H1 (cell line): ENCODE measurements at regions of chr3 and their contacts with region 1.

Region 1: GRCh38 chr3:32177702-32178198 is 60.7 kb upstream of the CMTM8 start:
- DNase-seq: peak in 1 of 2 experiments; percentile 73
- H3K4me3 ChIP-seq: no peak overlapping the region
- H3K27ac ChIP-seq: no peak overlapping the region
- H3K4me1 ChIP-seq: peaks cover 0 to 3% (median 0%) of the 10 kb centered on the region in 4 experiments; a peak in 1 of 7 replicates
- H3K27me3 ChIP-seq: no peaks in the 10 kb centered on the region
- CTCF ChIP-seq: peak; percentile 55 to 100 (median 96)
- EP300 ChIP-seq: no peak
- POLR2A ChIP-seq: no peak
- RAD21 ChIP-seq: peak; percentile 89 to 90

Region 2: GRCh38 chr3:32200490-32200889 is 22.7 kb after region 1 on chr3:
- CTCF ChIA-PET with region 1: interaction called, 10 read pairs
- POLR2A ChIA-PET with region 1: no interaction called
- DNase-seq: no peak
- H3K4me3 ChIP-seq: no peak overlapping the region
- H3K27ac ChIP-seq: no peak overlapping the region
- H3K4me1 ChIP-seq: no peaks in the 10 kb centered on the region
- H3K27me3 ChIP-seq: no peaks in the 10 kb centered on the region
- CTCF ChIP-seq: no peak
- EP300 ChIP-seq: no peak
- POLR2A ChIP-seq: no peak
- RAD21 ChIP-seq: no peak

Region 3: GRCh38 chr3:32257639-32258038 is 79.9 kb after region 1 on chr3:
- CTCF ChIA-PET with region 1: interaction called, 10 read pairs
- POLR2A ChIA-PET with region 1: no interaction called
- DNase-seq: no peak
- H3K4me3 ChIP-seq: no peak overlapping the region
- H3K27ac ChIP-seq: no peak overlapping the region
- H3K4me1 ChIP-seq: no peaks in the 10 kb centered on the region
- H3K27me3 ChIP-seq: no peaks in the 10 kb centered on the region
- CTCF ChIP-seq: no peak
- EP300 ChIP-seq: no peak
- POLR2A ChIP-seq: no peak
- RAD21 ChIP-seq: no peak

Region 4: GRCh38 chr3:32313723-32314473 is 136.1 kb after region 1 on chr3:
- CTCF ChIA-PET with region 1: interaction called, 28 read pairs
- POLR2A ChIA-PET with region 1: no interaction called
- DNase-seq: no peak
- H3K4me3 ChIP-seq: no peak overlapping the region
- H3K27ac ChIP-seq: no peak overlapping the region
- H3K4me1 ChIP-seq: peaks cover 0 to 14% (median 4%) of the 10 kb centered on the region in 4 experiments; a peak in 6 of 7 replicates
- H3K27me3 ChIP-seq: no peaks in the 10 kb centered on the region
- CTCF ChIP-seq: no peak
- EP300 ChIP-seq: no peak
- POLR2A ChIP-seq: no peak
- RAD21 ChIP-seq: no peak

Region 5: GRCh38 chr3:32347343-32348125 is 169.8 kb after region 1 on chr3:
- CTCF ChIA-PET with region 1: interaction called, 26 read pairs
- POLR2A ChIA-PET with region 1: no interaction called
- DNase-seq: no peak
- H3K4me3 ChIP-seq: peak overlapping the region in 1 of 4 experiments; percentile 10; a peak in 1 of 8 replicates
- H3K27ac ChIP-seq: no peak overlapping the region
- H3K4me1 ChIP-seq: peaks cover 3 to 13% (median 12%) of the 10 kb centered on the region in 4 experiments; a peak in 5 of 7 replicates
- H3K27me3 ChIP-seq: no peaks in the 10 kb centered on the region
- CTCF ChIP-seq: no peak
- EP300 ChIP-seq: no peak
- POLR2A ChIP-seq: no peak
- RAD21 ChIP-seq: no peak